Colonic mucosa (tissue), 4 donors: ENCODE measurements at regions of chr1 and their contacts with region 1.

Region 1: GRCh38 chr1:102191723-102192122 is 195.0 kb upstream of the OLFM3 start:
- DNase-seq: peak; percentile 33
- H3K4me3 ChIP-seq: no peak overlapping the region
- H3K27ac ChIP-seq: no peak overlapping the region
- H3K4me1 ChIP-seq: no peaks in the 10 kb centered on the region
- H3K27me3 ChIP-seq: no peaks in the 10 kb centered on the region
- CTCF ChIP-seq: peak; percentile 47

Region 2: DNA sequence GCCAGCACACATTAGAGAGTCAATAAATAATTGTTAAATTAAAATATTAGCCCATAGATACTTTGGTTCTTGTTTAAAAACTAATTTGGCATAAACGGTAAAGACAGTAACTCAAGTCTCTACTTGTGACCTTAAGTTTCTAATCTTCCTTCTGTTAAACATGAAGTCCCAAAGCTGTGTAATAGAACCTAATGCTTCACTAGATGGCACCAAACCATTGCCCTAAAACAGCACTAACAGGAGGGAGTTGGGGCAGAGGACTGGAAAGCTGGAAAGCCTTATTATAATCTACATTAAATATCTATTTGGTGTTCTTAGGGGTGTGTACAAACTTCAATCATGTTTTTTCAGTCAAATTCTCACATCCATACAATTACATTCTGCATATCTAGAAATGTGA is 371.7 kb before region 1 on chr1:
- intact Hi-C with region 1: loop called (anchors 10 kb)
- DNase-seq: no peak
- H3K4me3 ChIP-seq: no peak overlapping the region
- H3K27ac ChIP-seq: no peak overlapping the region
- H3K4me1 ChIP-seq: no peaks in the 10 kb centered on the region
- H3K27me3 ChIP-seq: no peaks in the 10 kb centered on the region
- CTCF ChIP-seq: peak; percentile 25

Region 3: GRCh38 chr1:101993710-101994109 is 198.0 kb before region 1 on chr1:
- intact Hi-C with region 1: loop called (anchors 5 kb)
- DNase-seq: no peak
- H3K4me3 ChIP-seq: no peak overlapping the region
- H3K27ac ChIP-seq: no peak overlapping the region
- H3K4me1 ChIP-seq: no peaks in the 10 kb centered on the region
- H3K27me3 ChIP-seq: no peaks in the 10 kb centered on the region
- CTCF ChIP-seq: no peak

Region 4: DNA sequence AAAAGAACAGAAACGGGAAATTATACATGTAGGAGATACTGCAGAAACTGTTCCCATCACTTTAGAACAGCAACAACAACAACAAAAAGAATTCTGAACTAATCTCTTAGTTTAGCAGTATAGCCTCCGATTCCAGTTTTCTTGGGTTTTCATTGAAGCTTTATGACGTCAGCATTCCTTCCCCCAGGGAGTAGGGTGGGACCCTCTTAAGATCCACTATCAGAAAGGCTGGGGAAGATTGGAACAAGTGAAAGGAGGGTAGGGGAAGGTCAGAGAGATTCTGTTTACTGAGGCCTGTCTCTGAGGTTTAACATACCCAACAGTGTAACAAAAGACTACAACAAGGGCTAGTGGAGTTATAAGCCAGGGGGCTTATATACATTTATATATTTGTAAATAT is 73.6 kb before region 1 on chr1:
- intact Hi-C with region 1: no loop called
- DNase-seq: no peak
- H3K4me3 ChIP-seq: no peak overlapping the region
- H3K27ac ChIP-seq: no peak overlapping the region
- H3K4me1 ChIP-seq: no peaks in the 10 kb centered on the region
- H3K27me3 ChIP-seq: no peaks in the 10 kb centered on the region
- CTCF ChIP-seq: no peak

Region 5: GRCh38 chr1:102726417-102726816 is 534.7 kb after region 1 on chr1:
- intact Hi-C with region 1: no loop called
- DNase-seq: no peak
- H3K4me3 ChIP-seq: no peak overlapping the region
- H3K27ac ChIP-seq: no peak overlapping the region
- H3K4me1 ChIP-seq: no peaks in the 10 kb centered on the region
- H3K27me3 ChIP-seq: no peaks in the 10 kb centered on the region
- CTCF ChIP-seq: no peak